Transverse colon (tissue), 4 donors: ENCODE measurements at regions of chr7 and their contacts with region 1.

Region 1: GRCh38 chr7:19982841-19983835 is 209.7 kb upstream of the TMEM196 start:
- DNase-seq: peak; percentile 46
- H3K4me3 ChIP-seq: no peak overlapping the region
- H3K27ac ChIP-seq: no peak overlapping the region
- H3K4me1 ChIP-seq: no peaks in the 10 kb centered on the region
- H3K27me3 ChIP-seq: no peaks in the 10 kb centered on the region
- CTCF ChIP-seq: peak; percentile 26 to 36 (median 28)
- EP300 ChIP-seq: no peak
- POLR2A ChIP-seq: no peak

Region 2: GRCh38 chr7:19944363-19945120 is 38.6 kb before region 1 on chr7:
- in situ Hi-C with region 1: no loop called
- intact Hi-C with region 1: no loop called
- DNase-seq: no peak
- H3K4me3 ChIP-seq: no peak overlapping the region
- H3K27ac ChIP-seq: no peak overlapping the region
- H3K4me1 ChIP-seq: no peaks in the 10 kb centered on the region
- H3K27me3 ChIP-seq: no peaks in the 10 kb centered on the region
- CTCF ChIP-seq: no peak
- EP300 ChIP-seq: no peak
- POLR2A ChIP-seq: no peak

Region 3: GRCh38 chr7:20021831-20022230 is 38.7 kb after region 1 on chr7:
- in situ Hi-C with region 1: no loop called
- intact Hi-C with region 1: no loop called
- DNase-seq: no peak
- H3K4me3 ChIP-seq: no peak overlapping the region
- H3K27ac ChIP-seq: no peak overlapping the region
- H3K4me1 ChIP-seq: no peaks in the 10 kb centered on the region
- H3K27me3 ChIP-seq: no peaks in the 10 kb centered on the region
- CTCF ChIP-seq: no peak
- EP300 ChIP-seq: no peak
- POLR2A ChIP-seq: no peak

Region 4: DNA sequence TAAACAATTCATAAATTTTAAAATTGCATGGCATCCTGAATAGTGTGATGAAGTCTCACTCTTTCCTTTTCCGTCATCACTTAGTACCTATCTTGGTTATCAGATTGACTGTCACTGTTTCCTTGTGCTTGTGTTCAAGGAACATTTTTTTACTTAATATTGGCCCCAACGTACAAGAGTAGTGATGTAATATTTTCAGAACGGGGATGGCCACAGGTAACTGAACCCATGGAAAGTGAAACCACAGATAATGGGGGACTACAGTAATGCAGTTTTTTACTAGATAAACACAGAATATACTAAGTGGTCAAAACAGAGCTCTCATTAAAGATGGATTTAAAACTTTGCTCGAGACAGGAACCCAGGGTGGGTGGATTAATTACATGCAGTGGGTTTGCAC is 148.6 kb after region 1 on chr7:
- in situ Hi-C with region 1: no loop called
- intact Hi-C with region 1: no loop called
- DNase-seq: no peak
- H3K4me3 ChIP-seq: no peak overlapping the region
- H3K27ac ChIP-seq: no peak overlapping the region
- H3K4me1 ChIP-seq: no peaks in the 10 kb centered on the region
- H3K27me3 ChIP-seq: no peaks in the 10 kb centered on the region
- CTCF ChIP-seq: no peak
- EP300 ChIP-seq: no peak
- POLR2A ChIP-seq: no peak

Region 5: GRCh38 chr7:20172736-20173334 is 189.7 kb after region 1 on chr7:
- in situ Hi-C with region 1: loop called in 2 of 4 experiments (anchors 10 to 25 kb)
- intact Hi-C with region 1: no loop called
- DNase-seq: peak; percentile 62
- H3K4me3 ChIP-seq: no peak overlapping the region
- H3K27ac ChIP-seq: no peak overlapping the region
- H3K4me1 ChIP-seq: peaks cover 0 to 8% (median 2%) of the 10 kb centered on the region in 4 donors
- H3K27me3 ChIP-seq: no peaks in the 10 kb centered on the region
- CTCF ChIP-seq: peak; percentile 35 to 56 (median 43)
- EP300 ChIP-seq: no peak
- POLR2A ChIP-seq: no peak